Naive thymus-derived CD4-positive, alpha-beta T cell (primary cell): ENCODE measurements at regions of chr3 and their contacts with region 1.

Region 1: DNA sequence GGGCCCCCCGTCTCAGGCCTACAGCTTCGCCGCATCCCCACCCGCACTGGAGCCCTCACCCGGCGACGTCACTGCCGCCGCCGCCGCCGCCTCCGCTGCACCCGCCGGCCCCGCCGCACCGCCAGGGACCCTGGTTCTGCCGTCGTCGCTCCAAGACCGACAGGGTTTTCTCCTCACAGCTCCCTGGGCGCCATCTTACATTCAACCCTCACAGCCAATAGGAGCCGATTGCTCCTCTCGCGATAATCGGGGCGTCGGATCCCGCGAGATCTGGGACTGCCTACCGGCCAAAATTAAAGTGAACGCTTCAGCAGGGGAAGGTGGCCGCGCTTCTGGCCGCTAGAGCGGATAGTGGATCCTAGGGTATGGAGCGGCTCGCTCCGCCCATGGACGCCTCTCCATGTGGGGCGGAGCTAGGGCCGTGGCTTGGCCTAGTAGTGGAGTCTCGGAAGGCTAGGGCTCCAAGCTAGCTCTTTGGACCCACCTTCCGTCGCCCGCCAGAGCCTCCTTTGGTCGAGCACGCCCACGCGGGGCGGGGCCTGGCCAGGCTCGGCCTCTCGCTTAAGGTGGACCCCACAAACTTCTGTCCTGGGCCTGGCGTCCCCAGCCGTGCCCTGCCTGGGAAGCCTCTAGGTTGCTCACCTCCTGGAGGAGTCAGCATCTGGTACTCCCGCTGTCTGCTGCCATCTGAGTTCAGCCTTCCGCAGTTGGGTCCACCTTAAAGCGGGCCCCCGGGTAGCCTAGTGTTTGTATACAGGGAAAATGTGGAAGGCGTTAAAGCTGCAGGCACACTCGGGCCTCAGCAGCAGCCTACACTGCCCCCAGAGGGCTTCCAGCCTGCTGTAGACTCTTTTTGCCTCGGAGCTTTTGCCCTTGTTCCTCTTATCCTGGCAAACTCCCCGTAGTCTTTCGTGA is at the start of gene QRICH1:
- DNase-seq: peak; percentile 93 to 98 (median 96)
- ATAC-seq: peak; percentile 86
- H3K4me3 ChIP-seq: peak within 1 kb of the TSS; percentile 100
- H3K4me3 Mint-ChIP-seq: peak within 1 kb of the TSS; percentile 85 to 99 (median 96)
- H3K27ac ChIP-seq: peak within 1 kb of the TSS; percentile 87
- H3K27ac Mint-ChIP-seq: peak within 1 kb of the TSS; percentile 88 to 99 (median 97)
- H3K4me1 ChIP-seq: peaks cover 26 to 35% of the 10 kb centered on the region in 2 donors
- H3K4me1 Mint-ChIP-seq: peaks cover 25 to 49% (median 34%) of the 10 kb centered on the region in 7 donors
- H3K27me3 ChIP-seq: no peaks in the 10 kb centered on the region
- H3K27me3 Mint-ChIP-seq: no peaks in the 10 kb centered on the region
- total RNA-seq, gene QRICH1: 146 to 192 (median 184) TPM

Region 2: GRCh38 chr3:48685602-48686511 is 408.3 kb before region 1 on chr3 and contains the start of gene NCKIPSD:
- CTCF ChIA-PET with region 1: no interaction called
- POLR2A ChIA-PET with region 1: no interaction called
- intact Hi-C with region 1: loop called (anchors 1 to 10 kb)
- DNase-seq: peak; percentile 83 to 96 (median 92)
- ATAC-seq: peak; percentile 97
- H3K4me3 ChIP-seq: peak within 1 kb of the TSS; percentile 92
- H3K4me3 Mint-ChIP-seq: peak within 1 kb of the TSS; percentile 88 to 95 (median 93)
- H3K27ac ChIP-seq: peak within 1 kb of the TSS; percentile 79
- H3K27ac Mint-ChIP-seq: peak within 1 kb of the TSS; percentile 73 to 94 (median 89)
- H3K4me1 ChIP-seq: peaks cover 8 to 18% of the 10 kb centered on the region in 2 donors
- H3K4me1 Mint-ChIP-seq: peaks cover 29 to 38% (median 33%) of the 10 kb centered on the region in 7 donors
- H3K27me3 ChIP-seq: no peaks in the 10 kb centered on the region
- H3K27me3 Mint-ChIP-seq: no peaks in the 10 kb centered on the region
- total RNA-seq, gene NCKIPSD: 13.7 to 42.1 (median 20.3) TPM

Region 3: GRCh38 chr3:49007068-49007770 is 86.9 kb before region 1 on chr3 and contains the start of gene WDR6:
- CTCF ChIA-PET with region 1: interaction called, 3 read pairs
- POLR2A ChIA-PET with region 1: interaction called, 38 read pairs
- intact Hi-C with region 1: loop called (anchors 1 kb)
- DNase-seq: peak; percentile 86 to 98 (median 96)
- ATAC-seq: peak; percentile 95
- H3K4me3 ChIP-seq: peak within 1 kb of the TSS; percentile 96
- H3K4me3 Mint-ChIP-seq: peak within 1 kb of the TSS; percentile 94 to 100 (median 98)
- H3K27ac ChIP-seq: peak within 1 kb of the TSS; percentile 90
- H3K27ac Mint-ChIP-seq: peak within 1 kb of the TSS; percentile 95 to 100 (median 98)
- H3K4me1 ChIP-seq: peaks cover 8 to 16% of the 10 kb centered on the region in 2 donors
- H3K4me1 Mint-ChIP-seq: peaks cover 14 to 34% (median 28%) of the 10 kb centered on the region in 7 donors
- H3K27me3 ChIP-seq: no peaks in the 10 kb centered on the region
- H3K27me3 Mint-ChIP-seq: no peaks in the 10 kb centered on the region
- total RNA-seq, gene WDR6: 170 to 335 (median 204) TPM

Region 4: GRCh38 chr3:49120438-49121131 is 26.5 kb after region 1 on chr3 and contains the start of gene USP19:
- CTCF ChIA-PET with region 1: interaction called, 8 read pairs
- POLR2A ChIA-PET with region 1: interaction called, 61 read pairs
- intact Hi-C with region 1: loop called (anchors 1 kb)
- DNase-seq: peak; percentile 92 to 96 (median 95)
- ATAC-seq: peak; percentile 96
- H3K4me3 ChIP-seq: peak within 1 kb of the TSS; percentile 70
- H3K4me3 Mint-ChIP-seq: peak within 1 kb of the TSS; percentile 80 to 97 (median 88)
- H3K27ac ChIP-seq: peak within 1 kb of the TSS; percentile 92
- H3K27ac Mint-ChIP-seq: peak within 1 kb of the TSS; percentile 83 to 96 (median 94)
- H3K4me1 ChIP-seq: peaks cover 17 to 27% of the 10 kb centered on the region in 2 donors
- H3K4me1 Mint-ChIP-seq: peaks cover 0 to 31% (median 25%) of the 10 kb centered on the region in 7 donors
- H3K27me3 ChIP-seq: no peaks in the 10 kb centered on the region
- H3K27me3 Mint-ChIP-seq: no peaks in the 10 kb centered on the region
- total RNA-seq, gene USP19: 60.0 to 106 (median 78.0) TPM

Region 5: GRCh38 chr3:49339945-49340800 is 246.1 kb after region 1 on chr3 and contains the start of gene USP4:
- CTCF ChIA-PET with region 1: no interaction called
- POLR2A ChIA-PET with region 1: interaction called, 9 read pairs
- intact Hi-C with region 1: loop called (anchors 1 to 5 kb)
- DNase-seq: peak; percentile 78 to 93 (median 91)
- ATAC-seq: peak; percentile 91
- H3K4me3 ChIP-seq: peak within 1 kb of the TSS; percentile 89
- H3K4me3 Mint-ChIP-seq: peak within 1 kb of the TSS; percentile 81 to 96 (median 86)
- H3K27ac ChIP-seq: peak within 1 kb of the TSS; percentile 95
- H3K27ac Mint-ChIP-seq: peak within 1 kb of the TSS; percentile 95 to 99 (median 98)
- H3K4me1 ChIP-seq: peaks cover 23 to 30% of the 10 kb centered on the region in 2 donors
- H3K4me1 Mint-ChIP-seq: peaks cover 32 to 61% (median 47%) of the 10 kb centered on the region in 7 donors
- H3K27me3 ChIP-seq: no peaks in the 10 kb centered on the region
- H3K27me3 Mint-ChIP-seq: no peaks in the 10 kb centered on the region
- total RNA-seq, gene USP4: 98.3 to 135 (median 109) TPM

Region 6: GRCh38 chr3:49519296-49519695 is 425.2 kb after region 1 on chr3:
- CTCF ChIA-PET with region 1: no interaction called
- POLR2A ChIA-PET with region 1: no interaction called
- intact Hi-C with region 1: no loop called
- DNase-seq: no peak
- ATAC-seq: no peak
- H3K4me3 ChIP-seq: no peak overlapping the region
- H3K4me3 Mint-ChIP-seq: no peak overlapping the region
- H3K27ac ChIP-seq: no peak overlapping the region
- H3K27ac Mint-ChIP-seq: no peak overlapping the region
- H3K4me1 ChIP-seq: no peaks in the 10 kb centered on the region
- H3K4me1 Mint-ChIP-seq: peaks cover 5 to 32% (median 26%) of the 10 kb centered on the region in 7 donors
- H3K27me3 ChIP-seq: no peaks in the 10 kb centered on the region
- H3K27me3 Mint-ChIP-seq: no peaks in the 10 kb centered on the region

Region 7: GRCh38 chr3:50235716-50236496 is 1141.8 kb after region 1 on chr3 and contains the start of gene GNAI2:
- CTCF ChIA-PET with region 1: no interaction called
- POLR2A ChIA-PET with region 1: interaction called, 3 read pairs
- intact Hi-C with region 1: loop called in 1 of 2 experiments (anchors 5 kb)
- DNase-seq: peak; percentile 95 to 99 (median 99)
- ATAC-seq: peak; percentile 93
- H3K4me3 ChIP-seq: peak within 1 kb of the TSS; percentile 90
- H3K4me3 Mint-ChIP-seq: peak within 1 kb of the TSS; percentile 92 to 99 (median 98)
- H3K27ac ChIP-seq: peak within 1 kb of the TSS; percentile 84
- H3K27ac Mint-ChIP-seq: peak within 1 kb of the TSS; percentile 87 to 97 (median 95)
- H3K4me1 ChIP-seq: peaks cover 30 to 35% of the 10 kb centered on the region in 2 donors
- H3K4me1 Mint-ChIP-seq: peaks cover 12 to 41% (median 37%) of the 10 kb centered on the region in 7 donors
- H3K27me3 ChIP-seq: no peaks in the 10 kb centered on the region
- H3K27me3 Mint-ChIP-seq: no peaks in the 10 kb centered on the region
- total RNA-seq, gene GNAI2: 225 to 442 (median 282) TPM